ENCODE measurements at regions of chr6 and their contacts with region 1.

Region 1: GRCh38 chr6:154995284-154996015 is at the start of gene TIAM2:
- DNase-seq: no peak
- H3K4me3 ChIP-seq: peak within 1 kb of the TSS; percentile 50 to 57 (median 55)
- H3K27ac ChIP-seq: no peak within 1 kb of the TSS
- H3K4me1 ChIP-seq: peaks cover 8% of the 10 kb centered on the region
- H3K27me3 ChIP-seq: peaks cover 3% of the 10 kb centered on the region
- CTCF ChIP-seq: no peak
- total RNA-seq, gene TIAM2: 4.0 to 13.3 TPM

Region 2: DNA sequence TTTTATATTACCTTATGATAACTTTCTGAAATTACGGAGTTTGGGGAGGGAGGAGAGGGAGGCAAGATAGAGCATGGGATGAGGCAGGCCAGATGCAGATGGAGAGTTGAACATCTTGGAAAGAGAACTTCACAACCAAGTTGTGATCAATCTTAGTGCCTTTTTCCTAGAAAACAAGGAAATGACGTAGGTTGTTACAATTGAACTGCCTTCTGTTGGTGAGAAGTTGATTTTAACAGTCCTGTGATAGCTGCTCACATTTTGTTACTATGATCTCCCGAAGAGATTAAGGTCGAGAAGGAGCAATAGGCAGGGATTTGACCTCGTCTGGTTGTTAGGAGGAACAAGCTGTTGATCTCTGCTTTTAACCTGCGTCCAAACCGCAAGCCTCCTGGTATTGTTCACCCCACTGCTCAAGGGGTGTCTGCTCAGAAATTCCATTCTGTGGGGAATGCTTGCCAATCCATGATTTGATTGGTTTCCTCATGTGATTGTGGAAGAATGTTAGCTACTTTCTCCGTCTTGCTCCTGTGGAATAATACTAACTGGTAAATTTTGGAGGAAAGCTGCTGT is 34.8 kb after region 1 on chr6:
- CTCF ChIA-PET with region 1: no interaction called
- dilution Hi-C with region 1: loop called (anchors 5 kb)
- in situ Hi-C with region 1: no loop called
- intact Hi-C with region 1: no loop called
- DNase-seq: no peak
- H3K4me3 ChIP-seq: no peak overlapping the region
- H3K27ac ChIP-seq: peak overlapping the region; percentile 71
- H3K4me1 ChIP-seq: peaks cover 39% of the 10 kb centered on the region
- H3K27me3 ChIP-seq: no peaks in the 10 kb centered on the region
- CTCF ChIP-seq: no peak